CD8-positive, alpha-beta T cell (primary cell): ENCODE measurements at regions of chr16 and their contacts with region 1.

Region 1: DNA sequence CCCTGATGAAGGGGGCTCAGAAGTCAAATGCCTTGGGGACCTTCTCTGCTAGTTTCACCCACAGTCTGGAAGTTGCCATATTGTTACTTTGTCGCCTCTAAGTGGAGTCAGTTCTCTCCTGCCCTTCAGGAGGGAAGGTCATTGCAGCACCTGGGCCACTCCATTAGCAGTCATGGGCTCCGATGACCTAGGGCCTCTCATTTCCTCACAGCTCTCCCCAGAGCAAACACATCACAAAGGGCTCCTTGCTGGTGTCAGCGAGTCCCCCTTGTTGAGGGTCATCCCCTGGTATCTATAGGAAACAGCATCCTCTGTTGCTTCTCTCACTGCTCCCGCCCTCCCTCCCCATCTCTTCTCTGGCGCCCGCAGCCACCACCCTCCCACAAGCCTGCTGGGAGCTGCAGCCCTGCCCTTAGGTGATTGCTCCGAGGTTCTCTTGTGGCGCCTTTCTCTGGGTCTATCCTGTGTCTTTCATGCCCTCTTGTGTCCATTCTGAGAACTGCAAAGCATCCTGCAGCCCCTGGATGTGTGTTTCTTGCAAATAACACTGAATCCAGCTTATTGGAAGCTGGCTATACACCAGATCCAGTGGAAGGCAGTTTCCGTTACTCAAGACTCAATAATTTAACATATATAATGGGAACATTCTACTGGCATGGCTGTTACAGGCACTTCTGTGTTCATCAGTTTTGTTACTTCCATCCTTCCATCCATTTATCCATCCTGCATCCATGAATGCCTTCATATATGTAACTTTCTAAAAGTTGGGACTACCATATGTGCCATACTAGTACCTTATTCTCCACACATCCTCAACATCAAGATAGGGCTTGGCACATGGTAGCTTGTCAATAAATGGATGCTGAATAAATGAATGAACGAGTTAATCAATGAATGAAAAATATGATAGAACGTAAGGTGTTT is 21.2 kb downstream of the PDILT start:
- DNase-seq: peak in 6 of 9 experiments; percentile 4 to 56 (median 32)
- ATAC-seq: no peak
- H3K4me3 ChIP-seq: no peak overlapping the region
- H3K4me3 Mint-ChIP-seq: no peak overlapping the region
- H3K27ac ChIP-seq: no peak overlapping the region
- H3K27ac Mint-ChIP-seq: no peak overlapping the region
- H3K4me1 ChIP-seq: no peaks in the 10 kb centered on the region
- H3K4me1 Mint-ChIP-seq: peaks cover 2% of the 10 kb centered on the region
- H3K27me3 ChIP-seq: no peaks in the 10 kb centered on the region
- H3K27me3 Mint-ChIP-seq: peaks cover 25% of the 10 kb centered on the region
- CTCF ChIP-seq: peak; percentile 62

Region 2: GRCh38 chr16:19086322-19087199 is 1296.8 kb before region 1 on chr16:
- CTCF ChIA-PET with region 1: no interaction called
- POLR2A ChIA-PET with region 1: no interaction called
- intact Hi-C with region 1: loop called in 1 of 2 experiments (anchors 10 kb)
- DNase-seq: peak; percentile 53 to 87 (median 72)
- ATAC-seq: peak; percentile 91
- H3K4me3 ChIP-seq: peak overlapping the region; percentile 25 to 40
- H3K4me3 Mint-ChIP-seq: peak overlapping the region; percentile 63
- H3K27ac ChIP-seq: no peak overlapping the region
- H3K27ac Mint-ChIP-seq: no peak overlapping the region
- H3K4me1 ChIP-seq: peaks cover 3% of the 10 kb centered on the region
- H3K4me1 Mint-ChIP-seq: peaks cover 3% of the 10 kb centered on the region
- H3K27me3 ChIP-seq: peaks cover 0 to 4% of the 10 kb centered on the region in 2 experiments
- H3K27me3 Mint-ChIP-seq: peaks cover 2% of the 10 kb centered on the region
- CTCF ChIP-seq: peak; percentile 98

Region 3: GRCh38 chr16:19601083-19601976 is 782.0 kb before region 1 on chr16:
- CTCF ChIA-PET with region 1: no interaction called
- POLR2A ChIA-PET with region 1: no interaction called
- intact Hi-C with region 1: loop called in 1 of 2 experiments (anchors 5 kb)
- DNase-seq: peak in 6 of 9 experiments; percentile 5 to 58 (median 30)
- ATAC-seq: no peak
- H3K4me3 ChIP-seq: no peak overlapping the region
- H3K4me3 Mint-ChIP-seq: no peak overlapping the region
- H3K27ac ChIP-seq: no peak overlapping the region
- H3K27ac Mint-ChIP-seq: no peak overlapping the region
- H3K4me1 ChIP-seq: no peaks in the 10 kb centered on the region
- H3K4me1 Mint-ChIP-seq: no peaks in the 10 kb centered on the region
- H3K27me3 ChIP-seq: no peaks in the 10 kb centered on the region
- H3K27me3 Mint-ChIP-seq: no peaks in the 10 kb centered on the region
- CTCF ChIP-seq: peak; percentile 54

Region 4: DNA sequence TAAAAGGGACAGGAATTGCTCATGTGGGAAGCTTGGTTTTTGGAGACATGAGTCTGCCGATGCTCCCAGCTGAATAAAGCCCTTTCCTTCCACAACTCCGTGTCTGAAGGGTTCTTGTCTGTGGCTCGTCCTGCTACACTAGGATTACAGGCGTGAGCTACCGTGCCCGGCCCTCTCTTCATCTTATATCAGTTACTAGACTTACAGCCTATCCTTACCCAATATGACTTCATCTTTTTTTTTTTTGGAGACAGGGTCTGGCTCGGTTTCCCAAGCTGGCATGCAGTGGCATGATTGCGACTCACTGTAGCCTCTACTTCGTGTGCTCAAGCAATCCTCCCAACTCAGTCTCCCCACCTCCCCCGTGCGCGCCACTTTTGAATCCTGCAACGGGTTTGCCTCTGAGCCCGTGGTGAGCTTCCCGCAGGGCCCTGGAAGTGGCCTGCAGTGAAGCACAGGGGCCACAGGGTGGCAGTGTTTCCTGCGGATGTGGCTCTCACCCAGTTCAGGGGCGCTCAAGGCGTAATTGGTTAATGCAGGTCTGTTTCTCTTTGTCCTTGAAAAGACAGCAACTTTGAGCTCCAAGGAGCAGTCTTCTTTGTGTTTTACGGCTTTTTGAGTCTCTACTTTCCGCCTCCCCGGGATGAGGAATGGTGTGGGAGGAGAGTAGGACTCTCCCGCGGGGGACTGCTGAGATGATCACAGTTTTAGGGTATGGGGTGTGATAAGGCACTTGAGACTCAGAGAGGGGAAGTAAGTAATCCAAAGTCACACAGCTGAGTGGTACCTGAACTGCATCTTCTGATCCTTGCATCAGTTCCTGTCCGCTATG is 476.0 kb before region 1 on chr16:
- CTCF ChIA-PET with region 1: interaction called, 53 read pairs
- POLR2A ChIA-PET with region 1: no interaction called
- intact Hi-C with region 1: loop called in 1 of 2 experiments (anchors 1 kb)
- DNase-seq: peak; percentile 38 to 80 (median 67)
- ATAC-seq: peak; percentile 100
- H3K4me3 ChIP-seq: peak overlapping the region in 1 of 2 experiments; percentile 11
- H3K4me3 Mint-ChIP-seq: peak overlapping the region; percentile 76
- H3K27ac ChIP-seq: no peak overlapping the region
- H3K27ac Mint-ChIP-seq: no peak overlapping the region
- H3K4me1 ChIP-seq: no peaks in the 10 kb centered on the region
- H3K4me1 Mint-ChIP-seq: peaks cover 10% of the 10 kb centered on the region
- H3K27me3 ChIP-seq: no peaks in the 10 kb centered on the region
- H3K27me3 Mint-ChIP-seq: peaks cover 17% of the 10 kb centered on the region
- CTCF ChIP-seq: peak; percentile 94

Region 5: GRCh38 chr16:20372701-20373100 is 10.7 kb before region 1 on chr16:
- CTCF ChIA-PET with region 1: interaction called, 22 read pairs
- POLR2A ChIA-PET with region 1: no interaction called
- intact Hi-C with region 1: no loop called
- DNase-seq: no peak
- ATAC-seq: no peak
- H3K4me3 ChIP-seq: no peak overlapping the region
- H3K4me3 Mint-ChIP-seq: no peak overlapping the region
- H3K27ac ChIP-seq: no peak overlapping the region
- H3K27ac Mint-ChIP-seq: no peak overlapping the region
- H3K4me1 ChIP-seq: no peaks in the 10 kb centered on the region
- H3K4me1 Mint-ChIP-seq: no peaks in the 10 kb centered on the region
- H3K27me3 ChIP-seq: no peaks in the 10 kb centered on the region
- H3K27me3 Mint-ChIP-seq: peaks cover 9% of the 10 kb centered on the region
- CTCF ChIP-seq: no peak